A673 (cell line): ENCODE measurements at regions of chr6 and their contacts with region 1.

Region 1: GRCh38 chr6:126605089-126605488 is 265.2 kb downstream of the CENPW start:
- DNase-seq: no peak
- H3K4me3 ChIP-seq: no peak overlapping the region
- H3K27ac ChIP-seq: no peak overlapping the region
- H3K4me1 ChIP-seq: no peaks in the 10 kb centered on the region
- H3K27me3 ChIP-seq: no peaks in the 10 kb centered on the region
- CTCF ChIP-seq: no peak

Region 2: GRCh38 chr6:125439512-125439911 is 1165.6 kb before region 1 on chr6:
- CTCF ChIA-PET with region 1: no interaction called
- POLR2A ChIA-PET with region 1: interaction called, 16 read pairs
- intact Hi-C with region 1: no loop called
- DNase-seq: no peak
- H3K4me3 ChIP-seq: no peak overlapping the region
- H3K27ac ChIP-seq: no peak overlapping the region
- H3K4me1 ChIP-seq: no peaks in the 10 kb centered on the region
- H3K27me3 ChIP-seq: peaks cover 11% of the 10 kb centered on the region
- CTCF ChIP-seq: no peak

Region 3: DNA sequence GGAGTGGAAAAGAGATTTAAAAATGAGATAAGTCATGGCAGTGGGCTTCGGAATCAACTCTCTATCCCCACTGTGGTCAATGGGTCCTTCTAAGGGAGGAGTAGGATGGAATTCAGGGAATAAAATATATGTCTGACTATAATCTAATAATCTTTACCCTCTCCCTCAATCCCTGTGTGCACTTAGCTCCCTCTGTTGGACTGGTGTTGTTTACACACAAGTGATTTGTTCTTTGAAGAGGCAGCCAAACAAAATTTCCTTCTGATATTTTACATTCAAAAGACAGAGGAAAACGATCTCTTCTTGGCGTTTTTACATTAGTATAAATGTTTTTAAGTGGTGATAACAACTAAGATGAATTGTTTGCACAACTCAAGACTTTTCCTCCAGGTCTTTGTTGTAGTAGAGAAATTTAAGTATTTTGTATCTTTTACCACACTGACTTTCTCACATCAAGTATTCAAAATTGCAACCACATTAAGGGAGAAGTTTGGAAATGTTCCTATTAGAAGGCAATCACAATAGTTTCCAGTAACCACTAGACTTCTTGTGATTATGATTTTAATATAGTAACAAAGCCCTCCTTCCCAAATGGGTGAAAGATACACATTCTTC is 52.6 kb after region 1 on chr6:
- CTCF ChIA-PET with region 1: no interaction called
- POLR2A ChIA-PET with region 1: no interaction called
- intact Hi-C with region 1: no loop called
- DNase-seq: peak; percentile 69
- H3K4me3 ChIP-seq: no peak overlapping the region
- H3K27ac ChIP-seq: no peak overlapping the region
- H3K4me1 ChIP-seq: no peaks in the 10 kb centered on the region
- H3K27me3 ChIP-seq: no peaks in the 10 kb centered on the region
- CTCF ChIP-seq: peak; percentile 71